ENCODE measurements at regions of chr2 and their contacts with region 1.

Region 1: DNA sequence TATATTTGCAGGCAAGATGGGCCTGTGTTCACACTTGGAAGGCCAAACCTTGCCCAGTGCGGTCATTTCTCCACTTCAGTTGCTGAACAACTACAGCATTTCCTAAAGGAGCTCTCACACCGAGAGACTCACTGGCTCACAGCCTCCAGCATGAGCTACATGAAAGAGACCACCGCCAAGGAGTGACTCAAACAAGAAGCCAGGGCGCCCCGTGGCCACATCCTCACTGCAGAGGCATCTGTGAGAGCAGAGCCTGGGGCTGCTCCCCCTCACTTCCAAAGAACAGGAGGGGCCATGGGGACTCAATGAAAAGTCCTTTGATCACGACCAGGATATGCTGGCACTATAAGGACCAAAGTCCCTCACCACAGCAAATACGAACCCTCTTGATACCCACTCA is 50.0 kb downstream of the TMEM163 start:
- DNase-seq: peak; percentile 95
- H3K4me3 Mint-ChIP-seq: no peak overlapping the region
- H3K27ac Mint-ChIP-seq: peak overlapping the region; percentile 13
- H3K4me1 Mint-ChIP-seq: peaks cover 65% of the 10 kb centered on the region
- H3K27me3 Mint-ChIP-seq: peaks cover 10% of the 10 kb centered on the region

Region 2: GRCh38 chr2:134623796-134624195 is 45.0 kb before region 1 on chr2:
- CTCF ChIA-PET with region 1: no interaction called
- POLR2A ChIA-PET with region 1: no interaction called
- intact Hi-C with region 1: loop called (anchors 1 kb)
- DNase-seq: peak; percentile 60
- H3K4me3 Mint-ChIP-seq: no peak overlapping the region
- H3K27ac Mint-ChIP-seq: no peak overlapping the region
- H3K4me1 Mint-ChIP-seq: peaks cover 7% of the 10 kb centered on the region
- H3K27me3 Mint-ChIP-seq: peaks cover 18% of the 10 kb centered on the region

Region 3: GRCh38 chr2:134683561-134684112 is 14.8 kb after region 1 on chr2:
- CTCF ChIA-PET with region 1: interaction called, 3 read pairs
- POLR2A ChIA-PET with region 1: interaction called, 4 read pairs
- intact Hi-C with region 1: loop called (anchors 1 kb)
- DNase-seq: peak; percentile 59
- H3K4me3 Mint-ChIP-seq: no peak overlapping the region
- H3K27ac Mint-ChIP-seq: no peak overlapping the region
- H3K4me1 Mint-ChIP-seq: peaks cover 46% of the 10 kb centered on the region
- H3K27me3 Mint-ChIP-seq: peaks cover 9% of the 10 kb centered on the region

Region 4: GRCh38 chr2:134714228-134714627 is 45.4 kb after region 1 on chr2:
- CTCF ChIA-PET with region 1: interaction called, 4 read pairs
- POLR2A ChIA-PET with region 1: interaction called, 3 read pairs
- intact Hi-C with region 1: loop called (anchors 2 kb)
- DNase-seq: no peak
- H3K4me3 Mint-ChIP-seq: no peak overlapping the region
- H3K27ac Mint-ChIP-seq: no peak overlapping the region
- H3K4me1 Mint-ChIP-seq: peaks cover 23% of the 10 kb centered on the region
- H3K27me3 Mint-ChIP-seq: peaks cover 30% of the 10 kb centered on the region

Region 5: GRCh38 chr2:135230150-135230549 is 561.3 kb after region 1 on chr2:
- CTCF ChIA-PET with region 1: no interaction called
- POLR2A ChIA-PET with region 1: no interaction called
- intact Hi-C with region 1: no loop called
- DNase-seq: no peak
- H3K4me3 Mint-ChIP-seq: no peak overlapping the region
- H3K27ac Mint-ChIP-seq: no peak overlapping the region
- H3K4me1 Mint-ChIP-seq: no peaks in the 10 kb centered on the region
- H3K27me3 Mint-ChIP-seq: no peaks in the 10 kb centered on the region

Region 6: DNA sequence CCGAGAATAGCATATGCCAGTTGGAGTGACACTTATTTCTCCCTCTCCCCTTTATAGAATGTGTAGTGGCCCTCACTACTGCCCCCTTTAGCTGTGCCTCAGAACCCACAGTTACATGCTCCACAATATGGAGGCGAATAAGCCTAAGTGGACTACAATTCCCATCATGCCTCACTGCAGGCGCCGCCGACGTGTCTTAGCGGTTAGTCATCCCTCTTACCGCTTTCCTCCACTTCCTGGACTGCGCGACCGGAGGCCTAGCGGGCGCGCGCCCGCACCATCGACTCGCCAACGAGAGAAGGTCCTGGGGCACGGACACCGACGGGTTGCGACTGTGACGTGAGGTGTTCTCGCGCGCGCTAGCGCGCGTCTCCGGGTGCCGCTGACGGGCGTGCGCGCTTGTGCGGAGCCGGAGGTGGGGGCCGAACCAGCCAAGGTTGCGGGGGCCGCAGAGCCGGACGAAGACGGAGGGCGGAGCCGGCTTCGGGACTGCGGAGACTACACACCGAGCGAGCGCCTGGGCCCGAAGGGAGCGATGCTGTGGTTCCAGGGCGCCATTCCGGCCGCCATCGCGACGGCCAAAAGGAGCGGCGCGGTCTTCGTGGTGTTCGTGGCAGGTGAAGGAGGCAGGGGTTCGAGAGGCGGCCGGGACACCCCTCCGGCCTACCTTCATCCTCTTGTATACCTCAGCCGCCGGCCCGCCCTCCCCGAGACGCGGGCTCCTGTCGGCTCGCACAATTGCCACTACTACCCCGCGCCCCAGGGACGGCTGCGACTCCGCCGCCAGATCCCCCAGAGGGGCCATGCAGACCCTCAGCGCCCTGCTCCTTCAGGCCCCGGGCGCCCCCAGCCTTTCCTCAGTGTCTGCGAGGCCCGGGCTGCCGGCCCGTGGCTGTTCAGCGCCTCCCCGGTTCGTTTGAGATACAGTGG is 1072.8 kb after region 1 on chr2 and contains the start of gene UBXN4:
- CTCF ChIA-PET with region 1: no interaction called
- POLR2A ChIA-PET with region 1: no interaction called
- intact Hi-C with region 1: loop called (anchors 5 kb)
- DNase-seq: peak; percentile 98
- H3K4me3 Mint-ChIP-seq: peak within 1 kb of the TSS; percentile 96
- H3K27ac Mint-ChIP-seq: peak within 1 kb of the TSS; percentile 99
- H3K4me1 Mint-ChIP-seq: peaks cover 24% of the 10 kb centered on the region
- H3K27me3 Mint-ChIP-seq: no peaks in the 10 kb centered on the region
- total RNA-seq, gene UBXN4: 107 TPM